Breast epithelium (tissue), 4 donors: ENCODE measurements at regions of chr19 and their contacts with region 1.

Region 1: DNA sequence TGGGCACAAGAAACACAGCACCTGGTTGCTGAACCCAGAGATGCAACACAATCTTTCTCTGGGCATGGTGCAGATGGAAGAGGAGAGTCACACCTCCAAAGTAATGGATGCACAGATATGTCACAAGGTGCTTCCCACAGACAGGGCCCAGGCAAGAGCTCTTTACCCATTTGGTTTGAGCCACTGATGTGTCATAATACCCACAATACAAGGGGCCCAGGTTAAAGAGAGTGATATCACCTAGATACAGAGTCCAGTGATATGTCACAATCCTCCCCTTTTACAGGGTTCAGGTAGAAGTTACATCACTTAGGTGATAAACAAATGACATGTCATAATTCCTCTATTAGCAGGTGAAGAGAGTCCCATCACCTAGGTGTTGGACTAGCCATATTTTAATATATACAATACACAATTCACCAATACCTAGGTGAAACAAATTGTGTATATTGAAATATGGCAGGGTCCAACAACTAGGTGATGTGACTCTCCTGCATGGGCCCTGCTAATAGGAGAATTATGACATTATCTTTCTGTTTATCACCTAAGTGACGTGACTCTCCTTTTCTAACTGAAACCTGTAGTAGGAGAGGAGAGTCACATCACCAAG is 5.6 kb upstream of the ZNF43 start:
- DNase-seq: no peak
- H3K4me3 ChIP-seq: no peak overlapping the region
- H3K27ac ChIP-seq: no peak overlapping the region
- H3K4me1 ChIP-seq: no peaks in the 10 kb centered on the region
- H3K27me3 ChIP-seq: no peaks in the 10 kb centered on the region
- CTCF ChIP-seq: no peak
- POLR2A ChIP-seq: no peak

Region 2: GRCh38 chr19:21823224-21823623 is 18.4 kb before region 1 on chr19:
- intact Hi-C with region 1: loop called (anchors 1 kb)
- DNase-seq: no peak
- H3K4me3 ChIP-seq: no peak overlapping the region
- H3K27ac ChIP-seq: no peak overlapping the region
- H3K4me1 ChIP-seq: no peaks in the 10 kb centered on the region
- H3K27me3 ChIP-seq: no peaks in the 10 kb centered on the region
- CTCF ChIP-seq: no peak
- POLR2A ChIP-seq: no peak

Region 3: DNA sequence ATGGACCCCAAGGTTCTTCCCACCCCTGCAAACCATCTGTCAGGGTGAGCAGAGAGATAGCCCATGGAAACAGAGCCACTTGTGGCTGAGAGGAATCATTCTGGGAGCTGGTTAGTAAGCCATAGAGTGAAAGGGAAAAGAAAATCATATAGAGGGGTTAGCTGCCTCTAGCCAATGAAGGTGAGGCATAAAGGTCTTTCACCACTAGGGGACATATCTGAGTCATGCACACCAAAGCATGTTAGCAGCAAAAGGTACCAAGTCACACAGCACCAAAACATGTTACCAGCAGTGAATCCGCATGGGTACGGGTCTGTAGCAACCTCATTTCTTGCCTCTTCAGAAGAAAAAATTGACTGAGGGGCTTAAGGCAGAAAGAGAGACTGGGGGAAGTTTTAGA is 71.1 kb after region 1 on chr19:
- intact Hi-C with region 1: no loop called
- DNase-seq: no peak
- H3K4me3 ChIP-seq: no peak overlapping the region
- H3K27ac ChIP-seq: no peak overlapping the region
- H3K4me1 ChIP-seq: no peaks in the 10 kb centered on the region
- H3K27me3 ChIP-seq: no peaks in the 10 kb centered on the region
- CTCF ChIP-seq: no peak
- POLR2A ChIP-seq: no peak